CD4-positive, alpha-beta memory T cell (primary cell): ENCODE measurements at regions of chr1 and their contacts with region 1.

Region 1: GRCh38 chr1:46303038-46303871 is at the starts of genes LRRC41 and UQCRH:
- DNase-seq: peak; percentile 94 to 96 (median 94)
- H3K4me3 ChIP-seq: peak within 1 kb of the TSS; percentile 73 to 90
- H3K4me3 Mint-ChIP-seq: peak within 1 kb of the TSS; percentile 96 to 100 (median 98)
- H3K27ac ChIP-seq: peak within 1 kb of the TSS; percentile 94
- H3K27ac Mint-ChIP-seq: peak within 1 kb of the TSS; percentile 97 to 98 (median 98)
- H3K4me1 ChIP-seq: peaks cover 54% of the 10 kb centered on the region
- H3K4me1 Mint-ChIP-seq: peaks cover 26 to 64% (median 40%) of the 10 kb centered on the region in 4 donors
- H3K27me3 ChIP-seq: no peaks in the 10 kb centered on the region
- H3K27me3 Mint-ChIP-seq: no peaks in the 10 kb centered on the region
- total RNA-seq, gene LRRC41: 31.8 to 32.0 TPM
- total RNA-seq, gene UQCRH: 123 to 128 TPM

Region 2: DNA sequence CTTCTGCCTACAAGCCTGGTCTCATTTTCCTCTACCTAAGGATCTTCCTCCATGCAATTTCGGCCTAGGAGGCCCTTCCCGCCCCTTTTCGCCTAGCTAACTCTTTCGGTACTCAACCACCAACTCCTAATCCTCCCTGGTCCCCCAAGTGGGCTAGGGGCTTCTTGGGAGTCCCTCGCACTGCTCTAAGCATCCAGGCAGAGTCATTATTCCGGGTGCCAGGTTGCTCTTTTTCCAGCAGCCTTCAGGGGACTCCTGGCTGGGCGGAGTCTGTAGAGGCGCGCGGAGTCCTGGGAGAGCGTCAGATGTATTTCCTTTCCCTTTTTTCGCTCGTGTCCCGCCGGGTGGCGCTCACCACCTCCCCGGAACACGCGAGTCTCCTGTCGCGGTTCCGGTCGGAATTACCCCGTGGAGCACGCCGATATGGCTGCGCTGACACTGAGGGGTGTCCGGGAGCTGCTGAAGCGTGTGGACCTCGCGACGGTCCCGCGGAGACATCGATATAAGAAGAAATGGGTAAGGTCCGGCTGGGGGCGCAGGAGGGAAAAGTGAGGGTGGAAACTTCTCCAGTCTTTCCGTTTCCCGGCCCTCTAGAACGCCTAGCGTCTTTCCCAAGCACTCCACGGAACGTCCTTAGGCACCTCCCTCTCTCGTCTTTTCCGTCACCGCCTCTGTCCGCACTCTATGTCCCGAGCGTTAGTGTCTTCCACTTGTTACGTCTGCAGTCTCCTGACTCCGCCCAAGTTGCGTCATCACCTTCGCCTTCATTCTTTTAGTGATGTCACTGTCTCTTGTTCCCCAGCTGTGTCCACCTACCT is 37.4 kb after region 1 on chr1 and contains the start of gene NSUN4:
- CTCF ChIA-PET with region 1: interaction called, 23 read pairs
- POLR2A ChIA-PET with region 1: interaction called, 44 read pairs
- intact Hi-C with region 1: loop called (anchors 2 kb)
- DNase-seq: peak; percentile 87 to 93 (median 88)
- H3K4me3 ChIP-seq: peak within 1 kb of the TSS; percentile 89 to 100
- H3K4me3 Mint-ChIP-seq: peak within 1 kb of the TSS; percentile 99 to 100 (median 100)
- H3K27ac ChIP-seq: peak within 1 kb of the TSS; percentile 97
- H3K27ac Mint-ChIP-seq: peak within 1 kb of the TSS; percentile 95 to 100 (median 100)
- H3K4me1 ChIP-seq: peaks cover 22% of the 10 kb centered on the region
- H3K4me1 Mint-ChIP-seq: peaks cover 25 to 50% (median 36%) of the 10 kb centered on the region in 4 donors
- H3K27me3 ChIP-seq: no peaks in the 10 kb centered on the region
- H3K27me3 Mint-ChIP-seq: no peaks in the 10 kb centered on the region
- total RNA-seq, gene NSUN4: 26.4 to 26.9 TPM